GM10248 (cell line): ENCODE measurements at regions of chr22 and their contacts with region 1.

Region 1: GRCh38 chr22:21938071-21938822 is 14.4 kb downstream of the PPM1F start:
- DNase-seq: peak; percentile 94
- CTCF ChIP-seq: peak; percentile 99

Region 2: GRCh38 chr22:21719024-21719423 is 219.2 kb before region 1 on chr22:
- CTCF ChIA-PET with region 1: interaction called, 10 read pairs
- POLR2A ChIA-PET with region 1: no interaction called
- DNase-seq: no peak
- CTCF ChIP-seq: no peak

Region 3: GRCh38 chr22:21921729-21922128 is 16.5 kb before region 1 on chr22:
- CTCF ChIA-PET with region 1: interaction called, 52 read pairs
- POLR2A ChIA-PET with region 1: no interaction called
- DNase-seq: no peak
- CTCF ChIP-seq: no peak

Region 4: DNA sequence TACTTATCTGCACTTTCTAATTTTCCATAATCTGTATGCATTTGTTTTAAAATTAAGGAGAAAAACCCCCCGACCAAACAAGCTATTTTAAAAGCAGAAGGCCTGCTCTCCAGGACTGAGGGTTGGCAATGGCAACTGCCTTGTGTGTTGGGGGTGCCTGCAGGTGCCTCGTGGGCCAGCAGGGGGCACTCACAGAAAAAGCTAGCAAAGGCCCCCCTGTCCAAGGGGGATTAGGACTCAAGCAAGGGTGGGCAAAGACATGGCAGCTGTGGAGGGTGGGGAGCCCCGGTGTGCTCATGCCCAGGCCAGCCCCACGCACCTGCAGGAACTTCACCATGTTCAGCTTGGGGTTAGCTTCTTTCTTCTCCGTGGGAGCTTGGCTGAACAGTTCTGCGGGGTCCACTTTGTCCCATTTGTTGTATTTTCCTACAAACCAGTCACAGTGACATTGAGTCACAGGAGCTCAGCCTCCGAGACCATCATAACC is 34.1 kb after region 1 on chr22:
- CTCF ChIA-PET with region 1: interaction called, 31 read pairs
- POLR2A ChIA-PET with region 1: interaction called, 6 read pairs
- DNase-seq: peak; percentile 90
- CTCF ChIP-seq: peak; percentile 90

Region 5: GRCh38 chr22:21996175-21996720 is 58.0 kb after region 1 on chr22:
- CTCF ChIA-PET with region 1: no interaction called
- POLR2A ChIA-PET with region 1: no interaction called
- DNase-seq: no peak
- CTCF ChIP-seq: no peak

Region 6: DNA sequence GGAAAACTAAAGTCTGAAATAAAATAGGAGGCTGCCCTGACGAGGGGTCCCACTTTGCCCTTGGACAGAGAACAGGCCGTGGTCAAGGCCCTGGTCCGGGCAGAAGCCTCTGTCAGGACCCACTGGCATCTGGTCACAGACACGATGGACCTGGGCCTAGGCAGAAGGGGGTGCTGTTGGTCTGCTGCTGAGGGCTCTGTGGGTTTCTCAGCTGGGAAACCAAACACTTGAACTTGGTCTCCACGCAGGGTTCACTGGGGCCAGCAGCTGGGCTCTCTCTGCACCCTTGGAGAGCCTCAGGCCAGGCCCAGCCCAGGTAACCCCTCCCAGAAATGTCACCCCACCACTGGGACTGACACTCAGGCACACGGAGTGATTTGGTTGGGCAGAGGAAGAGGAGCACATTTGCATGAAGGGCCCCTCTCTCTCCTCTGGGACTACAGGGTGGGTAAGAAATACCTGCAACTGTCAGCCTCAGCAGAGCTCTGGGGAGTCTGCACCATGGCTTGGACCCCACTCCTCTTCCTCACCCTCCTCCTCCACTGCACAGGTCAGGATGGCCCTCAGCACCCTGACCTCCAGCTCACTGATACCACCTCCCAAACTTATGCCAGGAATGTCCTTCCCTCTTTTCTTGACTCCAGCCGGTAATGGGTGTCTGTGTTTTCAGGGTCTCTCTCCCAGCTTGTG is 92.4 kb after region 1 on chr22:
- CTCF ChIA-PET with region 1: no interaction called
- POLR2A ChIA-PET with region 1: no interaction called
- DNase-seq: peak; percentile 83
- CTCF ChIP-seq: peak; percentile 74